A673 (cell line): ENCODE measurements at regions of chr5 and their contacts with region 1.

Region 1: GRCh38 chr5:139633295-139634027 is 14.7 kb upstream of the CXXC5 start:
- DNase-seq: peak; percentile 78
- H3K4me3 ChIP-seq: no peak overlapping the region
- H3K27ac ChIP-seq: no peak overlapping the region
- H3K4me1 ChIP-seq: peaks cover 28% of the 10 kb centered on the region
- H3K27me3 ChIP-seq: no peaks in the 10 kb centered on the region
- CTCF ChIP-seq: peak; percentile 98

Region 2: GRCh38 chr5:139422307-139422893 is 211.1 kb before region 1 on chr5:
- CTCF ChIA-PET with region 1: interaction called, 3 read pairs
- POLR2A ChIA-PET with region 1: interaction called, 3 read pairs
- intact Hi-C with region 1: loop called (anchors 5 kb)
- DNase-seq: peak; percentile 77
- H3K4me3 ChIP-seq: no peak overlapping the region
- H3K27ac ChIP-seq: no peak overlapping the region
- H3K4me1 ChIP-seq: peaks cover 7% of the 10 kb centered on the region
- H3K27me3 ChIP-seq: no peaks in the 10 kb centered on the region
- CTCF ChIP-seq: peak; percentile 94

Region 3: DNA sequence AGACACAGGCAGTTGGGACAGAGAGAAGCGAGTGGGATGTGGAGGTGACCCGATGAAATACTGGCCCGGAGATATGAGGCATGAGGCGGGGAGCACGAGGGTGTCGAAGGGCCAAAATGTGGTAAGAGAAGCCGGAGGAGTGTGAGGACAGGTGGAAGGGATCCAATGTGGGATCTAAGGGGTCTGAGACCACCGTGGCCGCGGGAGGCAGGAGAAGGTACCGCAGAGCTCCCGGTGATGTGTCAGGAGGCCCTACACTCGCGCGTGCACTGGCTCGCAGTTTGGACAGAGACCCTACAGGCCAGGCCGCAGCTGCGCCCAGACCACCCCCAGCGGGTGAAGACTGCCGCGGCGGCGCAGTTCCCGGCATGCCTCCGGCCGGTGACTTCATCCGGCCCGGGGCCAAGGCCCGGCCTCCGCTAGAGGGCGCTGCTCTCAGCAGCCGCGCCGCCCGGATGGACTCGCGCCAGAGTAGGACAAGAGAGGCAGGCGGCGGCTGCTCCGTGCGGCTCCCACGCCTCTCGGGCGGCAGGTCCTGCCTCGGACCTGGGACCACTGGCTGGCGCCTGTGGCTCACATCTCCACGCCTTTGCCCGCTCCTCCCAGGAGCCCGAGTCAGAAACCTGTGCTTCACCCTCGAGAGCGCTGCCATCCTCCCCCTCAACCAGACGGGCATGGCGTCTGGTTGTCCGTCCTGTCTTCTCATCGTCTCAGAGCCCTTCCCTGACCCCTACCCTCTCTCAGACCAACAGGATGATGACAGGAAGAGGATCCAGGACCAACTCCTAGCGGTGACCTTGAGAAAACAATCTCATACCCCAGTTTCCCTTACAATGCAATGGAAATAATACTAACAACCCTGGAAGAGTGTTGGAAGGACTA is 115.5 kb before region 1 on chr5:
- CTCF ChIA-PET with region 1: interaction called, 11 read pairs
- POLR2A ChIA-PET with region 1: no interaction called
- intact Hi-C with region 1: no loop called
- DNase-seq: peak; percentile 86
- H3K4me3 ChIP-seq: peak overlapping the region; percentile 46
- H3K27ac ChIP-seq: no peak overlapping the region
- H3K4me1 ChIP-seq: peaks cover 3% of the 10 kb centered on the region
- H3K27me3 ChIP-seq: no peaks in the 10 kb centered on the region
- CTCF ChIP-seq: peak; percentile 98

Region 4: GRCh38 chr5:139651853-139652787 is 18.7 kb after region 1 on chr5:
- CTCF ChIA-PET with region 1: interaction called, 19 read pairs
- POLR2A ChIA-PET with region 1: no interaction called
- intact Hi-C with region 1: loop called (anchors 1 kb)
- DNase-seq: peak; percentile 92
- H3K4me3 ChIP-seq: peak overlapping the region; percentile 90
- H3K27ac ChIP-seq: peak overlapping the region; percentile 58
- H3K4me1 ChIP-seq: peaks cover 63% of the 10 kb centered on the region
- H3K27me3 ChIP-seq: no peaks in the 10 kb centered on the region
- CTCF ChIP-seq: no peak

Region 5: GRCh38 chr5:139690064-139690802 is 56.8 kb after region 1 on chr5:
- CTCF ChIA-PET with region 1: interaction called, 11 read pairs
- POLR2A ChIA-PET with region 1: no interaction called
- intact Hi-C with region 1: loop called (anchors 1 kb)
- DNase-seq: peak; percentile 78
- H3K4me3 ChIP-seq: no peak overlapping the region
- H3K27ac ChIP-seq: peak overlapping the region; percentile 52
- H3K4me1 ChIP-seq: peaks cover 25% of the 10 kb centered on the region
- H3K27me3 ChIP-seq: no peaks in the 10 kb centered on the region
- CTCF ChIP-seq: peak; percentile 69

Region 6: DNA sequence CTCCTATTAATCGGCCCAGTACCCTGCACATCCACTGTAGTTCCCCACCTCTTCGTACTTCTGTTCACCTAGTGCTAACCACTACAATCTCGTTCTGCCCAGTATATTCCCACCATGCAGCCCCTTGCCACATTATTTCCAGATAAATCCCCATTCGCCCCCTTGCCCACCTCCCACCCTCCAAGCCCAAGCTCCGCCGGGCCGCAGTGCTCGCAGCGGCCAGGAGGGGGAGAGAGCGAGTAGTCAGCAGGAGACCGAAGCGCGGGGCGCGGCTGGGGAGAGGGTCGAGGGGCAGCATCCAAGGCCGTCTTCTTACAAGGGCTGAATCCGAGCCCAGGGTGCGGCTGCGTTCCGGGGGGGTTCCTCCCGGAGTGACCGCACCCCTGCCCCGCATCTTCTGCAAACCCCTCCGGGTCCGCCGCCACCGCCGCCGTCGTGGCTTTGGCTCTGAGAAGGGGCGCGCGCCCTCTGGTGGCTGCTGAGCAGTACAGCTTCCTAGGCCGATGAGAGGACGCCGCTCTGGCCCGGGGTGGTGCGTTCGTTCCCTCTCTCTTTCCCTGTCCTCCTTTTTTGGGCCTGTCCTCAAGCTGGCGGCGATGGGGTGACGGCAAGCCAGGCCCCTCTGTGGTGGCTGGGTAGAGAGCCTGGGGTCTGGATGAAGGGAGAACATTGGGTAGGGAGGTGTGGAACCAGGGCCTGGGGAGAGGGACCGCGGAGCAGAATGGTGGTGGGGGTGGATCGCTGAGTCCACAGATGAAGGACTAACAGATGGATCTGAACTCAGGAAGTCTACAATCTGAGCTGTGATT is 132.2 kb after region 1 on chr5:
- CTCF ChIA-PET with region 1: interaction called, 20 read pairs
- POLR2A ChIA-PET with region 1: no interaction called
- intact Hi-C with region 1: loop called (anchors 1 kb)
- DNase-seq: peak; percentile 81
- H3K4me3 ChIP-seq: peak overlapping the region; percentile 58
- H3K27ac ChIP-seq: no peak overlapping the region
- H3K4me1 ChIP-seq: no peaks in the 10 kb centered on the region
- H3K27me3 ChIP-seq: no peaks in the 10 kb centered on the region
- CTCF ChIP-seq: peak; percentile 96

Region 7: DNA sequence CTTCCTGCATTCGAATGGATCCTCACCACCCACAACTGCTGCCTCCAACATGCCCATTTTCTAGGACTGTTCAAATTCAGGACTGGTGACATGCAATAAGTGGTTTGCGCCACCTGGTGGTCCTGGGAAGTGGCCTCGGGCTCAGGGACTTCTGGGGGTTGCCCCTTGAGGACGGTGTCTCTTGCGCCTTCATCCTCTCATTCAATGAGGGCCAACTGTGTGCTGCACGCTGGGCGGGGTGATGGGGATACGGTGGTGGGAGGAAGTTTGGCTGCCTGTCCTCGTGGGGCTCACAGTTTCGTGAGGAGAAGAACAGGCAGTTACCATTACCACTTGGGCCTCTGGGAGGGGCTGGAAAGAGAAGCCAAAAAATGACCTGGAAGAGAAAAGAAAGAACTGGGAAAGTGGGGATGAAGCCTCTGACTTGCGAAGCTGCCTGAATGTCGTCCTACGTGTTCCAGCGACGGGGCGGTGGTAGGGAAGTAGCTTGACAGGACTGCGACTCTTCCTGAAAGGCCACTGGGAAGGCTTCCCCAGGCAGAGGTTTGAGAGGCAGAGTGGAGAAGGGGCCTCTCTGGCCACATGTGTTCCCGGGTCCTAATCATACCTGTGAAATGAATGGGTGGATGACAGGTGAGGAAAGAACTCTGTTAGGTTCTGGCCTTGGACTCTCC is 211.1 kb after region 1 on chr5:
- CTCF ChIA-PET with region 1: no interaction called
- POLR2A ChIA-PET with region 1: no interaction called
- intact Hi-C with region 1: loop called (anchors 10 kb)
- DNase-seq: peak; percentile 85
- H3K4me3 ChIP-seq: no peak overlapping the region
- H3K27ac ChIP-seq: no peak overlapping the region
- H3K4me1 ChIP-seq: no peaks in the 10 kb centered on the region
- H3K27me3 ChIP-seq: peaks cover 13% of the 10 kb centered on the region
- CTCF ChIP-seq: peak; percentile 88